ENCODE measurements at regions of chr6 and their contacts with region 1.

Region 1: DNA sequence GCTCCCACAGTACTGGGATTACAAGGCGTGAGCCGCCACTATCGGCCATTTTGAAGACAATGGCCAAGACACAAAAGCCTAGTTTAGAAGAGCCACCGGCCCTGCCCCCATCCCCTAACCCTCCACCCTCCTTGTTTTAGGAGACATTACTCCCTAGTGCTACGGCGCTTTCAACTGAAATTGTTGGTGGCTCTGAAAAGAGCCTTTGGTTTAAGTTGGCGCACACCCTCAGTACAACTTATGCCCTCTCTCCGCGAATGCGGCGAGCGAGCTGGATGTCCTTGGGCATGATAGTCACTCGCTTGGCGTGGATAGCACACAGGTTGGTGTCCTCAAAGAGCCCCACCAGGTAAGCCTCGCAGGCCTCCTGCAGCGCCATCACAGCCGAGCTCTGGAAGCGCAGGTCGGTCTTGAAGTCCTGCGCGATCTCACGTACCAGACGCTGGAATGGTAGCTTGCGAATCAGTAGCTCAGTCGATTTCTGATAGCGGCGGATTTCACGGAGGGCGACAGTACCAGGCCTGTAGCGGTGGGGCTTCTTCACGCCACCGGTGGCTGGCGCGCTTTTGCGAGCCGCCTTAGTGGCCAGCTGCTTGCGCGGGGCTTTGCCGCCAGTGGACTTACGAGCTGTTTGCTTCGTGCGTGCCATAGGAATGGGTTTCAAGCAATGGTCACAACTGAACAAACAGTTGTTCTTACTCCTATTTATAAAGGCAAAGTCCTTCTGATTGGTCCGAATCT is 114.9 kb upstream of the BTN3A2 start:
- DNase-seq: peak; percentile 84
- H3K4me3 Mint-ChIP-seq: peak overlapping the region; percentile 90
- H3K27ac Mint-ChIP-seq: peak overlapping the region; percentile 93
- H3K4me1 Mint-ChIP-seq: peaks cover 42% of the 10 kb centered on the region
- H3K27me3 Mint-ChIP-seq: no peaks in the 10 kb centered on the region

Region 2: DNA sequence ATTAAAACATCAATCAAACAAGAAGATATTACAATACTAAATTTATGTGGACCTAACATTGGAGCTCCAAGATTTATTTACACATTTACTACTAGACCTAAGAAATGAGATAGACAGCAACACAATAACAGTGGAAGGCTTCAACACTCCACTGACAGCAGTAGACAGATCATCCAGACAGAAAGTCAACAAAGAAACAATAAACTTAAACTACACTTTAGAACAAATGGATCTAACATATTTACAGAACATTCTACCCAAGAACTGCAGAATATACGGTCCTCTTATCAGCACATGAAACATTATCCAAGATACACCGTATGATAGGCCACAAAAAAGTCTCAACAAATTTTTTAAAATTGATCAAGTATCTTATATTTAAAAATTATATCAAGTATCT is 445.3 kb before region 1 on chr6:
- CTCF ChIA-PET with region 1: no interaction called
- POLR2A ChIA-PET with region 1: no interaction called
- DNase-seq: no peak
- H3K4me3 Mint-ChIP-seq: no peak overlapping the region
- H3K27ac Mint-ChIP-seq: no peak overlapping the region
- H3K4me1 Mint-ChIP-seq: no peaks in the 10 kb centered on the region
- H3K27me3 Mint-ChIP-seq: peaks cover 15% of the 10 kb centered on the region

Region 3: DNA sequence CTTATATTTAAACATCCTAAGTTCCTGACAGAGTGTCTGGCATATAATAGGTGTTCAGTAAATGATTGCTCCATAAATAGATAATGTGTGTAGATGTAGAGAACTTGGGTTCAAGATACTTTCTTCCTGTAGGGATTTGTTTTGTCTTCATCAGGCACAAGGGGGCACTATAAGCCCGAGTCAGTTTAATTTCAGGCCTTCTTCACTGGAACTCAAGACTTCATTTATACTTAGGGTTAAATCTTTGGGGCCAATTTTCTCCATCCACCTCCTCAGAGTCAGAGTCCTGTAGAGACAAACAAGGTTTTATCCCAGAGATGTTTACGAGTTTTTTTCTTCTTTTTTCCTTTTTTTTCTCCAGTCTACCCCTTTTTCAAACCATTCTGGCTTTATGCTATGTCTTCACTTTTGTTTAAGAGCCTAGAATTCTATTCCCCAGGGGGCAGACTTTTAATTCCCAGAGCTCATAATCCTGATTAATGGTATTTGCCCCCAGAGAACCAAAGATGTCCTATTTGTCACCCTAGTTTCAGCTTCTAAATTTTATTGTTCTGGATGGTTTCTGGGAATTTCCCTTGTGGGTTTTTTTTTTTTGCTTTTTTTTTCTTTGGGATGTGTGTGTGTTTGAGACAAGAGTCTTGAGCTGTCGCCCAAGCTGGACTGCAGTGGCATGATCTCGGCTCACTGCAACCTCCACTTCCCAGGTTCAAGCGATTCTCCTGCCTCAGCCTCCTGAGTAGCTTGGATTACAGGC is 74.5 kb before region 1 on chr6:
- CTCF ChIA-PET with region 1: interaction called, 3 read pairs
- POLR2A ChIA-PET with region 1: interaction called, 18 read pairs
- DNase-seq: peak; percentile 68
- H3K4me3 Mint-ChIP-seq: peak overlapping the region; percentile 5
- H3K27ac Mint-ChIP-seq: peak overlapping the region; percentile 50
- H3K4me1 Mint-ChIP-seq: peaks cover 44% of the 10 kb centered on the region
- H3K27me3 Mint-ChIP-seq: no peaks in the 10 kb centered on the region

Region 4: GRCh38 chr6:26183581-26184366 is 66.4 kb before region 1 on chr6:
- CTCF ChIA-PET with region 1: interaction called, 7 read pairs
- POLR2A ChIA-PET with region 1: interaction called, 11 read pairs
- DNase-seq: peak; percentile 78
- H3K4me3 Mint-ChIP-seq: peak overlapping the region; percentile 75
- H3K27ac Mint-ChIP-seq: peak overlapping the region; percentile 92
- H3K4me1 Mint-ChIP-seq: peaks cover 71% of the 10 kb centered on the region
- H3K27me3 Mint-ChIP-seq: no peaks in the 10 kb centered on the region

Region 5: DNA sequence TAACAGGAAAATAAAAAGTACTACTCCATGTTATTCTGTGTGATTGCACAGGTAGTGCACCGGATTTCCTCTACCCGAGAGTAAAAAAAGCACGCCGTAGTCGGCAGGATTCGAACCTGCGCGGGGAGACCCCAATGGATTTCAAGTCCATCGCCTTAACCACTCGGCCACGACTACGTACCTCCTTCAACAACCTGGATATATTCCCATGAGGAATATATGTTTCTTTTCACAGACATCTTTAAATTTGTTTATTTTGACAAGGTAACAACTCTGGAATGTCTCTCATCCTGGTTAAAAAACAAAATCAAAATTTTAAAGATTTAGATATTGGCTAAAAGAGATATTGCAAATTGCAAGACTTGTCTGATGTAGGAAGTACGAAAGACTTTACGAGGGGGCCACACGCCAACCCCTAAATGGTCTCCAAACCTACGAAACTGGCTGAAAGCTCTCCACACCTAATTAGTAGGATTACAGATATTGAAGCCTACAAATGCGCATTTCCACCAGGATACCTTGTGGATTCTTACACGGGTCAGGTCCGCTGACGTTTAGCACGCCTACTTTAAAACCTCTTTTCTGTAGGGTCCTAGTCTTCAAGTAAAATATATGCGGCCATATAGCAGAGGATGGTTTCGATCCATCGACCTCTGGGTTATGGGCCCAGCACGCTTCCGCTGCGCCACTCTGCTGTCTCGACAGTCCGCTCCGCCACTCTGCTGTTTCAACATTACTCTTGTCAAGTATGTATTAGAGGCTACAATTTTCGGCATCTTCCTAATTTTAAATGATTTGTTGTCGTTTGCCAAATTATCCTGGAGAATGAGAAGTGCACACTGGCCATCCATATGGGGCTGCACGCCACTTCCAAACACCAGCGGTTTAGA is 62.6 kb after region 1 on chr6:
- CTCF ChIA-PET with region 1: interaction called, 3 read pairs
- POLR2A ChIA-PET with region 1: interaction called, 10 read pairs
- DNase-seq: peak; percentile 81
- H3K4me3 Mint-ChIP-seq: peak overlapping the region; percentile 83
- H3K27ac Mint-ChIP-seq: peak overlapping the region; percentile 82
- H3K4me1 Mint-ChIP-seq: peaks cover 53% of the 10 kb centered on the region
- H3K27me3 Mint-ChIP-seq: no peaks in the 10 kb centered on the region

Region 6: GRCh38 chr6:26342106-26343004 is 92.2 kb after region 1 on chr6:
- CTCF ChIA-PET with region 1: no interaction called
- POLR2A ChIA-PET with region 1: no interaction called
- DNase-seq: peak; percentile 39
- H3K4me3 Mint-ChIP-seq: peak overlapping the region; percentile 80
- H3K27ac Mint-ChIP-seq: peak overlapping the region; percentile 56
- H3K4me1 Mint-ChIP-seq: peaks cover 33% of the 10 kb centered on the region
- H3K27me3 Mint-ChIP-seq: peaks cover 15% of the 10 kb centered on the region

Region 7: DNA sequence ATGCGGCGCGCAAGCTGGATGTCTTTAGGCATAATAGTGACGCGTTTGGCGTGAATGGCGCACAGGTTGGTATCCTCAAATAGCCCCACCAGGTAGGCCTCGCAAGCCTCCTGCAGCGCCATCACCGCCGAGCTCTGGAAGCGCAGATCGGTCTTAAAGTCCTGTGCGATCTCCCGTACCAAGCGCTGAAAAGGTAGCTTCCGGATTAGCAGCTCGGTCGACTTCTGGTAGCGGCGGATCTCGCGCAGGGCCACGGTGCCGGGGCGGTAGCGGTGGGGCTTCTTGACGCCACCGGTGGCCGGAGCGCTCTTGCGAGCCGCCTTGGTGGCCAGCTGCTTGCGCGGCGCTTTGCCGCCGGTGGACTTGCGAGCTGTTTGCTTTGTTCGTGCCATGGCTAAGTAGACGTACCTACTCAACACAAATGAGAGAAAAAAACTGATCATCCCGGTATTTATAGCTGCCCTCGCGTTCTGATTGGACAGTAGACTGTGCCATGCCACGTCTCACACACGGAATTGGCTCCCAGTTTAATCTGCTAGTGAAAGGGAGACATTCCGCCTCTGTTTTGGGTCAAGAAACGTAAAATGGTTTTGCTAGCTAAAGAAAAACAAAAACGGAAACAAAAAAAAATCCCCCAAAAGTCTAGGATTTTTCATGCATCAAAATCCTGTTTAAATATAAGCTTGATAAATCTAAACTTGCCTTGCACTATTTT is 1622.0 kb after region 1 on chr6:
- CTCF ChIA-PET with region 1: no interaction called
- POLR2A ChIA-PET with region 1: interaction called, 34 read pairs
- DNase-seq: peak; percentile 87
- H3K4me3 Mint-ChIP-seq: peak overlapping the region; percentile 81
- H3K27ac Mint-ChIP-seq: peak overlapping the region; percentile 99
- H3K4me1 Mint-ChIP-seq: peaks cover 60% of the 10 kb centered on the region
- H3K27me3 Mint-ChIP-seq: no peaks in the 10 kb centered on the region

Measured in activated CD4-positive, alpha-beta memory T cell treated with anti-CD3 and anti-CD28 coated beads, Interleukin-2, amount 10 ng/mL, durations not matched to agents 7 days and 5 days (primary cell).